A549 (cell line): ENCODE measurements at regions of chr12 and their contacts with region 1.

Region 1: GRCh38 chr12:31518680-31519227 is 72.2 kb downstream of the DENND5B start:
- DNase-seq: peak; percentile 79 to 97
- ATAC-seq: peak; percentile 91 to 94
- H3K4me3 ChIP-seq: 0 out of 3 replicates have a peak overlapping the region, but pooled peaks have one; percentile 7
- H3K27ac ChIP-seq: peak overlapping the region; percentile 90 to 94
- H3K4me1 ChIP-seq: peaks cover 91% of the 10 kb centered on the region
- CTCF ChIP-seq: no peak
- EP300 ChIP-seq: peak; percentile 98 to 99
- POLR2A ChIP-seq: no peak
- RAD21 ChIP-seq: peak; percentile 49 to 71

Region 2: DNA sequence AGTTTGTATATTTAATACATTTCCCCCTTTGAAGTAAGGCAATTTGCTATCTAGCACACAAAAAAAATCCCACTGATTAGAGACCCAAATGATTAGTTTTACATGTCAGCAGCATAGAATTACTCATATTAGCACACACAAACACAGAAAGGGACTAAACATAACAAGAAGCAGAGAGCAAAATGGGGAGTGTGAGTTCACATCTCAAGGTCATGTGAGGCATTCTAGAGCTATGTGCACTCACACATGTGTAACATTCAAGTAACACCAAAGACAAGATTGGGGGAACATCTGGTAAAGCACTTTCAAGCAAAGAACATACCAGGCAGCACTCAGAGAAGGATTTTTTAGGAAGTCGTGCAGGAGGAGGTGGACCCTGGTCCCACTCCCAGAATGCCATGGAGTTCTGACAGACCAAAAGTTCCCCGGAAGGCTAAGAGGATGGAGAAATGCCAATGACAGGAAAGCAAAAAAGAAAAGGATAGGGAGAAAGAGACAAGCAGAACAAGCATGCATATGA is 87.0 kb before region 1 on chr12:
- CTCF ChIA-PET with region 1: interaction called, 3 read pairs
- POLR2A ChIA-PET with region 1: interaction called, 10 read pairs
- DNase-seq: no peak
- ATAC-seq: no peak
- H3K4me3 ChIP-seq: no peak overlapping the region
- H3K27ac ChIP-seq: no peak overlapping the region; a peak in 1 of 6 replicates
- H3K4me1 ChIP-seq: peaks cover 18% of the 10 kb centered on the region; the same call in 2 of the 3 replicates
- CTCF ChIP-seq: no peak
- EP300 ChIP-seq: no peak
- POLR2A ChIP-seq: no peak
- RAD21 ChIP-seq: no peak

Region 3: DNA sequence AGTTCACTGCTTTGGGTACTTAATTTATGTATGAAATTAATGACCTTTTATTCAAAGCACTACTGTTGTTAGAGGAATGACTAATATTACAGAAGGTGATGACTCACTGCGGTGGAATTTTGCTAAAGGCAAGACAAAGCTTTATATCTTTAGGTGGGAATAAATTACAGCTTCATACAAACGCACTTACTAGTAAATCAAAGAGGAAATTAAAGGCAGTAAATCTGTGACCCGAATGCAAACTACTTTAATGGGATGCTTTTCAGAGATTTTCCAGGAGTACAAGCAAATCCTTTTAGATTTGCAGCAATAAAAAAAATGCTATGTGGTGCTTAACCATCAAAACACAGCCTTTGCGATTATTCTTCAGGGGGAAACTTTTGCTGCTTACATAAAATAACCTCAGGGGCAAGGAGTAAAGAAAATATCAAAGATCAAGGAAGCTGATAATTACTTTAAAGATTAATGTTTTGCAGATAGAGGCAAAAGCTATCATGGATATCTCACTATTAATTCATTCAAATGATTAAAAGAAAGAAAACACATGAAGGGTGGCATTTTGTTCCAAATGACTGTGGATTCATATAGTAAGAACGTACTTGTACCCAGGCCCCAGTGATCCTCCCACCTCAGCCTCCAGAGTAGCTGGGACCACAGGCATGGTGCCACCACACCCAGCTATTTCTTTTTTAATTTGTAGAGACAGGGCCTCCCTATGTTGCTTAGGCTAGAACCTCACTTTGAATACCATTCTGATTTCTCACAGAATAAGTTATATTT is 26.7 kb before region 1 on chr12:
- CTCF ChIA-PET with region 1: interaction called, 4 read pairs
- POLR2A ChIA-PET with region 1: interaction called, 10 read pairs
- DNase-seq: peak; percentile 29 to 77
- ATAC-seq: peak in 1 of 2 experiments; percentile 65; a peak in 3 of 6 replicates
- H3K4me3 ChIP-seq: no peak overlapping the region
- H3K27ac ChIP-seq: peak overlapping the region; percentile 83 to 89
- H3K4me1 ChIP-seq: peaks cover 79% of the 10 kb centered on the region
- CTCF ChIP-seq: no peak
- EP300 ChIP-seq: peak in 1 of 2 experiments; percentile 31; a peak in 1 of 5 replicates
- POLR2A ChIP-seq: no peak
- RAD21 ChIP-seq: 0 out of 5 replicates have a peak, but pooled peaks of 1 of the 2 experiments have one; percentile 5

Region 4: GRCh38 chr12:31507966-31508365 is 10.8 kb before region 1 on chr12:
- CTCF ChIA-PET with region 1: interaction called, 3 read pairs
- POLR2A ChIA-PET with region 1: interaction called, 13 read pairs
- DNase-seq: no peak
- ATAC-seq: peak; percentile 69 to 71; a peak in 4 of 6 replicates
- H3K4me3 ChIP-seq: no peak overlapping the region
- H3K27ac ChIP-seq: peak overlapping the region; percentile 72 to 77
- H3K4me1 ChIP-seq: peaks cover 58% of the 10 kb centered on the region
- CTCF ChIP-seq: no peak
- EP300 ChIP-seq: no peak
- POLR2A ChIP-seq: no peak
- RAD21 ChIP-seq: no peak

Region 5: GRCh38 chr12:31589904-31590641 is 71.3 kb after region 1 on chr12:
- CTCF ChIA-PET with region 1: interaction called, 8 read pairs
- POLR2A ChIA-PET with region 1: interaction called, 44 read pairs
- DNase-seq: peak; percentile 62 to 81
- ATAC-seq: peak; percentile 69 to 79
- H3K4me3 ChIP-seq: peak overlapping the region; percentile 60
- H3K27ac ChIP-seq: peak overlapping the region; percentile 86 to 97
- H3K4me1 ChIP-seq: peaks cover 36% of the 10 kb centered on the region
- CTCF ChIP-seq: peak; percentile 28; the same call in 2 of the 3 replicates
- EP300 ChIP-seq: no peak
- POLR2A ChIP-seq: no peak; the same call in 1 of the 2 replicates
- RAD21 ChIP-seq: peak; percentile 24 to 25; a peak in 1 of 5 replicates

Region 6: DNA sequence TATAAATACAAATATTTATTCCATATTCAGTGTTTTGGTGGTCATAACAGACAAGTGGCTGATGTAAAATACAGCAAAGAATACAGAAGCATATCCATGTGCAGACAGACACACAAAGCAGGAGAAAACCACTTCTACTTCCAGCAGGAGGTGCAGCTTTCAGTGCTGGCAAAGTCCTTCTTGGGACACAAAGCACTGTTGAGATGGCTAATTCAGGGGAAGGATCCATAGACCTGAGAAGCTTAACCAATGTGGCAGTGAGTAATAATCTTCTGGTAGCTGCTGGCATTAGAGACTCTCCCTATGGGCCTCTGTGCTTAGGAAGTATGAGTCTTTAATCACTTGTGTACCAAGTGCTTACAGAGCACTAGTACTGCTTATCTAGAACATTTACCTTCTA is 183.3 kb after region 1 on chr12:
- CTCF ChIA-PET with region 1: no interaction called
- POLR2A ChIA-PET with region 1: no interaction called
- DNase-seq: peak in 1 of 2 experiments; percentile 60
- ATAC-seq: peak in 1 of 2 experiments; percentile 65; a peak in 4 of 6 replicates
- H3K4me3 ChIP-seq: no peak overlapping the region
- H3K27ac ChIP-seq: no peak overlapping the region
- H3K4me1 ChIP-seq: no peaks in the 10 kb centered on the region
- CTCF ChIP-seq: peak; percentile 22; the same call in 1 of the 3 replicates
- EP300 ChIP-seq: no peak
- POLR2A ChIP-seq: no peak
- RAD21 ChIP-seq: peak; percentile 19 to 38; a peak in 2 of 5 replicates